Activated T-helper 1 cell treated with anti-CD3 and anti-CD28 coated beads, Interleukin-12 subunit alpha, Interleukin-12 subunit beta, Interleukin-2, Interleukin-4 antibody, amounts not matched to agents 30 ng/mL and 10 ng/mL and 1 ng/mL, durations not matched to agents 14 hours and 24 hours and 36 hours (primary cell): ENCODE measurements at regions of chr2 and their contacts with region 1.

Region 1: DNA sequence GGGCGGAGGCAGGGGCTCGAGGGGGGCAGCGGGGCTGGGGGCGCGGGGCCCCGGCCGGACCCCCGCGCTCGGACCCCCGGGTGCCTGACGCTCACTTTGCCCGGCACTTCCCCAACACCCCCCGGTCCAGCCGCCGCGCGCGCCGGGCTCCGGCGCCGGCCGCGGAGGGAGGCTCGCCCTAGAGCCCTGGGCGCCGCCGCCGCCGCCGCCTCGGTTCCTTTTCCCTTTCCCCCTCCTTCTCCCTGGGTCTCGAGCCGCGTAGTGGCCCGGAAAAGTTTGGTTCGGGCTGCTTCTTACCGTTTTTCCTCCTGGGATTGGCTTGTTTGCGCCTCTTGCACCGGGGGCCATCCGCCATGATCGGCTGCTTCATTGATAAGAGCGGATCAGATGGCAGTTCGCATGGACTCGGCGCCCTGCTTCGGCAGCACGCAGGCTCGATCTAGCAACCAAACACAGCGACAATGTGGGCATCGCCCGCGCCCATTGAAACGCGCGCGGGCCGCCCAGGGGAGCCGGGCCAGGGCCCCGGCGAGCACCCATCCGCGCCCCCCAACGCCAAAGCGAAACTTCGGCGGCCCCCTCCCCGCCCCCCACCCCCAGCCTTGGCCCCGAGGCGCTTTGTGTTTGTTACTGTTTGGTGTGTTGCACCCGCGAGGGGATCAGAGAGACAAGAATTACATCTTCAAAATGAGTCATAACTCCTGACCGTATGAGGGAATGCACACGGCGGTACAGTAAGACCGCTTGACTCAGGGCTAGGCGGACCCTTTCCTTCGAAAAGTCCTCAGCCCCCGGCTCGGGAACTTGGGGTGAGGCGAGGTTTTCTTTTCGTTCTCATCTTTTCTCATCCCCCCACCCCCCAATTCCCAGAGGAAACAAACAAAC is 2.7 kb downstream of the ZEB2 start:
- DNase-seq: peak; percentile 44
- H3K4me3 Mint-ChIP-seq: no peak overlapping the region
- H3K27ac Mint-ChIP-seq: peak overlapping the region; percentile 100
- H3K4me1 Mint-ChIP-seq: peaks cover 25% of the 10 kb centered on the region
- H3K27me3 Mint-ChIP-seq: peaks cover 43% of the 10 kb centered on the region

Region 2: GRCh38 chr2:143128681-143129580 is 1388.3 kb before region 1 on chr2 and contains the start of gene ARHGAP15:
- intact Hi-C with region 1: loop called (anchors 2 kb)
- DNase-seq: peak; percentile 55
- H3K4me3 Mint-ChIP-seq: peak within 1 kb of the TSS; percentile 75
- H3K27ac Mint-ChIP-seq: peak within 1 kb of the TSS; percentile 93
- H3K4me1 Mint-ChIP-seq: peaks cover 40% of the 10 kb centered on the region
- H3K27me3 Mint-ChIP-seq: no peaks in the 10 kb centered on the region
- total RNA-seq, gene ARHGAP15: 64.3 and 65.3 TPM in 2 replicates

Region 3: GRCh38 chr2:143730155-143730952 is 786.9 kb before region 1 on chr2:
- intact Hi-C with region 1: loop called (anchors 1 kb)
- DNase-seq: no peak
- H3K4me3 Mint-ChIP-seq: peak overlapping the region; percentile 49
- H3K27ac Mint-ChIP-seq: peak overlapping the region; percentile 92
- H3K4me1 Mint-ChIP-seq: peaks cover 58% of the 10 kb centered on the region
- H3K27me3 Mint-ChIP-seq: no peaks in the 10 kb centered on the region

Region 4: GRCh38 chr2:144325086-144325485 is 192.1 kb before region 1 on chr2:
- intact Hi-C with region 1: loop called (anchors 2 kb)
- DNase-seq: peak; percentile 55
- H3K4me3 Mint-ChIP-seq: peak overlapping the region; percentile 72
- H3K27ac Mint-ChIP-seq: peak overlapping the region; percentile 97
- H3K4me1 Mint-ChIP-seq: peaks cover 81% of the 10 kb centered on the region
- H3K27me3 Mint-ChIP-seq: no peaks in the 10 kb centered on the region

Region 5: DNA sequence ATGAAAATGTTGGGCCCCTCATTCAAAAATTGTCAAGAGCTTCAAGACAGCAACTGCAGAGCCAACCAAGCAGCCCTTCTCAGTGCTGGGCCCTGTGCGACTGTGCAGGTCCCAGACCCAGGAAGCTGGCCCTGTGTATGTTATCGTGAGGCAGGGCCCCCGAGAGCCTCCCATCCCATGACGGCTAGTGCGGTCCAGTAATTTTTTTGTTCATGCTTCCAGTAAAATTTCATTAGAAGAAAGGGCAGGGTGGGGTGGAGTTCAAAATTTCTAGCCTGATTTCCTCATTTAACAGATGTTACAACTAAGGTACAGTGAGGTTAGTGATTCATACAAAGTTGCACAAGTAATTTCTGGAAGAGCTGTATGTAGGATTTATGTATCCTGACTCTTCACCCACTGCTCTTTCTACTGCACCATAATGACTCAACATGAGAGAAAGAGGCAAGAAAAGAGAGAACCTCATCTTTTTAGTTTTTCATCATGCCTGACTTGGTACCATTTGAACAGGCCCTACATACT is 102.8 kb before region 1 on chr2:
- intact Hi-C with region 1: loop called (anchors 1 kb)
- DNase-seq: no peak
- H3K4me3 Mint-ChIP-seq: no peak overlapping the region
- H3K27ac Mint-ChIP-seq: peak overlapping the region; percentile 55
- H3K4me1 Mint-ChIP-seq: peaks cover 29% of the 10 kb centered on the region
- H3K27me3 Mint-ChIP-seq: no peaks in the 10 kb centered on the region

Region 6: DNA sequence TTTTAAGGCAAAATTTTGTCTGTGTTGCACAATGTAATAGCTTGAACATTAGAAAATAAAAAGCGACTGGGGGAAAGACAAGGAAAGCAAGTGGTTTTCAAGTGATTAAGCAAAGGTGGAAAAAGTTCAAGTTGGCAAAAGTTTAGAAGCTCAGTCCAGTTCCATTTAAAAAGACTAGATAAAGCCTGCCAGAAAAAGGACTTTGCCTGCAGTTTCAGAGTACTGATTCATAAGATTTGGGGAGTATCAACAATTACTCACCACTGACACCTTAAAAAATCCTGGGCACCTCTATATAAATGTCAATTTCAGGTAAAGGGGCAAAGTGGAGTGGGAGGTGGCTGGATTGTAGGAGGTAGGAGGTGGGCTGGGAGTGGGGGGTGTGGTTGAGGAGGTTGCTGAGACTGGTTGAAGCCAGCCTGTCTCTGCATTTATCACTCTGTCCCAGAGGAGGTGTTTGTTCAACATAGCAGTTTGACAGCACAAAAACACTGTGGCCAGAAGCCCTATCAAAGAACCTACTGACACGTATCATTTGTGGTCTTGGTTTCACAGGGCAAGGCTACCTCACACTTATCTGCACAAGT is 11.9 kb before region 1 on chr2:
- intact Hi-C with region 1: loop called (anchors 1 kb)
- DNase-seq: no peak
- H3K4me3 Mint-ChIP-seq: no peak overlapping the region
- H3K27ac Mint-ChIP-seq: no peak overlapping the region
- H3K4me1 Mint-ChIP-seq: peaks cover 43% of the 10 kb centered on the region
- H3K27me3 Mint-ChIP-seq: peaks cover 14% of the 10 kb centered on the region

Region 7: DNA sequence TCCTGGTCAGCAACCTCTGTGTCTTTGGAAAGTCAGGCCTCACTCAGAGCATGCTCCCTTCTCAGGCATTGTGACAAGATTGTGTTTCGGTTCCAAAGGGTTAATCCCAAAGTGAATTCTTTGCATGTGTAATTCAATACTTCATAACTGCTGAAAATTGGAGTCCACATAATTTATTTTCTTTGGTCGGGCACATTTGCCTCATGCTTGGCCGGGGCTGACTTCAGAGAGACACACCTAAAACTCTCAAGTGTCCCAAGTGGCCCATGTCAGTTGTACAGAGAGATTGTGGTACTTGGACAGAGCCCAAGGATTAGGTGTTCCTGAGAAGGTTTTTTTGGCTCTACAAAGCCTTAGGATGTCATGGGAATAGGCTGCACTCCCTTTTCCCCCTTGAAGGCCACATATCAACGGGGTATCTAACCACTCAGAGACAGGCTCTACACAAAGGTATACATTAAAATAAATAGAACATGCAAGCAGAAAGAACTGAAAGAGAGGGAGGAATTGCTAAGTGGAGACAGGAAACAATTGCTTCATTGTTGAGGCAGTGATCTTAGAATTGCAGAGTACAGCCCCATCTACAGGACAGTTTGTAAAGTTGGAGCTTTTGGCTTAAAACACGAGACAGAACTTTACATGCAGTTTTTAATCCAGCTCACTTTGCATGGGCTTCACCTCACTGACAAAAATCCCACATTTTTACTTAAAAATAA is 1235.0 kb after region 1 on chr2:
- intact Hi-C with region 1: loop called (anchors 5 kb)
- DNase-seq: no peak
- H3K4me3 Mint-ChIP-seq: no peak overlapping the region
- H3K27ac Mint-ChIP-seq: no peak overlapping the region
- H3K4me1 Mint-ChIP-seq: peaks cover 23% of the 10 kb centered on the region
- H3K27me3 Mint-ChIP-seq: peaks cover 8% of the 10 kb centered on the region

Region 8: DNA sequence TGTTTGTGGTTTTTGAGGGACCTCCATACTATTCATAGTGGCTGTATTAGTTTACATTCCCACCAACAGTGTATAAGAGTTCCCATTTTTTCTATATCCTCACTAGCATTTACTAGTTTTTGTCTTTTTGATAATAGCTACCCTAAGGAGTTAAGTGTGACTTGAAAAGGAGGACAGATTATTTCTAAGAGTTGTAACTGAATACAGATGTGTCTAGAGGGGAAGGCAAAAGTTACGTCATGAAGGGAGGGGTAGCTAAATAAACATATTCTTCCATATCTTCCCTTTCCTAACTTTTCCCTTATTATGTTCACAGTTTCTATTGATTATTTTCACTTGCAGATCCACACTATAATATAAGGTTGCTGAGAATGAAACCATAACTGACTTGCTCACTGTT is 1318.4 kb after region 1 on chr2:
- intact Hi-C with region 1: no loop called
- DNase-seq: no peak
- H3K4me3 Mint-ChIP-seq: no peak overlapping the region
- H3K27ac Mint-ChIP-seq: no peak overlapping the region
- H3K4me1 Mint-ChIP-seq: no peaks in the 10 kb centered on the region
- H3K27me3 Mint-ChIP-seq: no peaks in the 10 kb centered on the region